Dendritic cell treated with granulocyte-macrophage colony-stimulating factor and Interleukin-4, amounts not matched to agents 40 ng/mL and 50 ng/mL, for 4 days (primary cell): ENCODE measurements at regions of chr20 and their contacts with region 1.

Region 1: DNA sequence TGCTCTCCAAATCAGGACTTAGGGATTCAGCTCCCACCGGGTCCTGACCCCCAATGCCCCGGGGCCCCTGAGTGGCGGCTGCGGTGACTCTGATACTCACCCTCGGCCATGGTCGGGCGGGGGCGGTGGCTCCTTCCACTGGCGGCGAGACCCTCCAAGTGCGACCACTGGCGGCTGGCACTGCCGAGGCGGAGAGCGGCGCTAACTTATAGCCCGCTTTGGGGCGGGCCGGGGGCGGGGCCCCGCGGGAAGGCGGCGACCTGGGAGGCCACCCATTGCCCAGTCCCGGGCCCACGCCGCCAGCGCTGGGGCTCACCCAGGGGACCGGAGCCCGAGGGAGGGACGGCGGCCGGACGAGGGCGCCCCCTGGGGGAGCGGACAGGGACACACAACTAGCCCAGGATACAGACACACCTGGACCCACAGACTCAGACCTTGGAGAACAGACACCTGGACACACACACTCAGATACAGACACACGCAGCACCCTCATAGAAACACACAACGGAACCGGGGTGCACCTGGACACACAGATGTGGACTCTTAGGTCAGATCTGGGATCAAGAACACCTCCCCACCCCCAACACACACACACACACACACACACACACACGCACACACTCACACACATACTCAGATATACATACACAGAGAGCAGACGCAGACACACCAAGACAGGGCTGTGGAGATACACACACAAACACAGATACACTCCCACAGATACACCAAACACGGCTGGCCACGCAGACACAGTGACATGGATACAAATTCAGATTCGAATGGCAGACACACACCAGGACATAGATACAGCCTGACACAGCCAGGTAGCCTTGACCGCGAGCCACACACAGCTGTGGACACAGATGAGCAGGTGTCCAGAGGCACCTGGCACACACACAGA is at the start of gene TGM2:
- H3K4me3 Mint-ChIP-seq: peak within 1 kb of the TSS; percentile 68
- H3K27ac Mint-ChIP-seq: peak within 1 kb of the TSS; percentile 54
- H3K4me1 Mint-ChIP-seq: peaks cover 78% of the 10 kb centered on the region
- H3K27me3 Mint-ChIP-seq: no peaks in the 10 kb centered on the region

Region 2: DNA sequence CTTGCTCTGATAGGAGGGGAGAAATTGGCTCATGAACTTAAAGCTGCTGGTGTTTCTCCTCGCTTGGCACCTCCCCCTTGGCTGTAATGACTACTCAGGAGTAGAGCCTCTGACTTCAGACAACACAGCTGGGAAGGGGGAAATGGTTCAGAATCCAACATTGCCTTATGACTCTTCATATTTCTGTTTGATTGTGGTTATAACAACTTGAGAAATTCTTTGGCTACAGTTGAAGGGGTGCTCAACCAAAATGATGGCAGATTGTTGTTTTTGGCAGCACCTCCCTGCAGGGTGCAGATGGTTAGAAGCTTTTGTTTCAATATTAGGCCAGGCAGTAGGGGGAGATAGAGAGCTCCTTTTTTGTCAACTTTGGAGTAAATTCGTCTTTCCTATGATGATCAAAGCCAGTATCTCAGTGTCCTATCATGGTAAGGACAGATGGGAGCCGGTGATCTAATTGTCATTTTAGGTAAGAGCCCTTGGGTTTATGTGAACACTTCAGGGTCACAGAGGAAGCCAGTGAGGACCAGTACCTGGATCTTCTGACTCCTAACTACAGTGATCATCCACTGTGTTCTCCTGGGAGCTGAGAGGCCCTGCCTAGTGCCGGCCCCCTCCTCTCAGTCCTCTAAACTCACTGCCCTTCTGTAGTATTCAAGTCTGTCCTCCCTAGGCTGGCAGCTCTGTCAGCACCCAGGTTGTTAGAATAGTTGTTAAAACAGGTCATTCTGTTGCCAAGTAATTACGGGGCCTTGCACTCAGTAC is 91.8 kb before region 1 on chr20:
- intact Hi-C with region 1: loop called (anchors 2 kb)
- H3K4me3 Mint-ChIP-seq: no peak overlapping the region
- H3K27ac Mint-ChIP-seq: peak overlapping the region; percentile 13
- H3K4me1 Mint-ChIP-seq: peaks cover 5% of the 10 kb centered on the region
- H3K27me3 Mint-ChIP-seq: no peaks in the 10 kb centered on the region

Region 3: GRCh38 chr20:38113401-38114325 is 51.7 kb before region 1 on chr20:
- intact Hi-C with region 1: loop called (anchors 1 kb)
- H3K4me3 Mint-ChIP-seq: peak overlapping the region; percentile 18
- H3K27ac Mint-ChIP-seq: peak overlapping the region; percentile 40
- H3K4me1 Mint-ChIP-seq: peaks cover 39% of the 10 kb centered on the region
- H3K27me3 Mint-ChIP-seq: no peaks in the 10 kb centered on the region

Region 4: GRCh38 chr20:38201356-38201755 is 36.0 kb after region 1 on chr20:
- intact Hi-C with region 1: loop called (anchors 5 kb)
- H3K4me3 Mint-ChIP-seq: no peak overlapping the region
- H3K27ac Mint-ChIP-seq: no peak overlapping the region
- H3K4me1 Mint-ChIP-seq: peaks cover 82% of the 10 kb centered on the region
- H3K27me3 Mint-ChIP-seq: peaks cover 1% of the 10 kb centered on the region